ENCODE measurements at regions of chr6 and their contacts with region 1.

Region 1: DNA sequence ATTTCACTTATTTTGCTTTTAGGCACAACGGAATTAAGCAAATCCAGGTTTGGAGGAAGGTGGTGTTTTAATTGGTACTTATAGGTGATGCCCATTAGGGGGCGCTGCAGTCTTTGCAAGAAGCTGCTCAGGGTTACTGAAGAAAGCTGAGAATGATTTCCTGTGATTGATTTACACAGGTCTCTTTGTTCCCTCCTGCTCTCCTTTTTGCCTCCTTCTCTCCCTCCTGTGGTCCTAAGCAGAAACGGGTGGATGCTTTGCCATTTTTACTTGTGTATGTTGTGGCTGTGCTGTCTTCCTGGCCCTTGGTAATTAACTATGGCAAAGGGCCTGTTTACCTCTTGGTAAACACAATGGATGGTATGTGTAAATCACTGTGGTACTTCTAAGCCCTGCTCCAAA is 97.8 kb downstream of the ANKS1A start:
- DNase-seq: peak; percentile 66
- ATAC-seq: peak; percentile 92
- H3K4me3 ChIP-seq: no peak overlapping the region
- H3K27ac ChIP-seq: no peak overlapping the region
- H3K4me1 ChIP-seq: no peaks in the 10 kb centered on the region
- H3K27me3 ChIP-seq: no peaks in the 10 kb centered on the region
- CTCF ChIP-seq: peak; percentile 84

Region 2: GRCh38 chr6:35139908-35140655 is 153.2 kb after region 1 on chr6:
- intact Hi-C with region 1: loop called (anchors 5 kb)
- DNase-seq: no peak
- ATAC-seq: peak; percentile 74
- H3K4me3 ChIP-seq: no peak overlapping the region
- H3K27ac ChIP-seq: no peak overlapping the region
- H3K4me1 ChIP-seq: peaks cover 9% of the 10 kb centered on the region
- H3K27me3 ChIP-seq: no peaks in the 10 kb centered on the region
- CTCF ChIP-seq: peak; percentile 84

Region 3: GRCh38 chr6:35240840-35241801 is 254.3 kb after region 1 on chr6:
- intact Hi-C with region 1: loop called (anchors 10 kb)
- DNase-seq: peak; percentile 87
- ATAC-seq: peak; percentile 88
- H3K4me3 ChIP-seq: no peak overlapping the region
- H3K27ac ChIP-seq: peak overlapping the region; percentile 47
- H3K4me1 ChIP-seq: peaks cover 24% of the 10 kb centered on the region
- H3K27me3 ChIP-seq: no peaks in the 10 kb centered on the region
- CTCF ChIP-seq: peak; percentile 95

Measured in upper lobe of right lung (tissue), 1 donor.